ENCODE measurements at regions of chr6 and their contacts with region 1.

Region 1: DNA sequence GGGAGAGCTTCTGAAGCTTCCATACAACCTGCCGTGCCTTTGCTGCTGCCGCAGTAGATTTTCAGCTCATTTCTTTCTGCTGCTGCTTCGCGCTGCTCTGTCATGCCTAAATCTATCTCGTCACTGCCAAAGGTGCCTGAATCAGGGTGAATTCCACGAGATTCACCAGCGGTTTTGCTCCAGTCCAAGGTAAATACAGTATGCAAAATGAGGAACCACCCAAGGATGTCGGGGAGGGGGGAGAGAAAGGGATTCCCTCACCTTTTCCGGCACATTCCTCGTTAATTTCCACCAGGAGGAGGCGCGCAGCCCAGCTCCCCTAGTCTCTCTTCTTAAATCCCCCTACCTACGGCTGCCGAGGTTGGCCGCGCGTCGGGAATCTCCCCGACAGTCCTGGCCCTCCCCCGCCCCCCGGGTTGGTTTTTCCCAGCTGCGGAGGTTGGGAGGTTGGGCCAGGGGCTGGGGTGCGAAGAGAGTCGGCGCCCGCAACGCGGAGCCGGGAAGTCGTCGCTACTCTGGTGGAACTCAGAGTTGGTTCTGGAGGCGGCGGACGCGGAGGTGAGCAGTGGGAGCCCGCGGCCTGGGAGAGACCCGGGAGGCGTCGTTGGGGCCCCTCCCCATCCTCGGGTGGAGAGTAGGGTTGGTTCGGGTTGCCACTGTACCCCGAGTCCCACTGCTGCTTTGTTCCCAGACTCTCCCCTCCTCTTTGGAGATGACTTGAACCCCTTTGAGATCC is at the start of gene TPBG:
- DNase-seq: peak; percentile 92
- ATAC-seq: peak; percentile 78
- H3K4me3 Mint-ChIP-seq: peak within 1 kb of the TSS; percentile 93
- H3K27ac Mint-ChIP-seq: peak within 1 kb of the TSS; percentile 97
- H3K4me1 Mint-ChIP-seq: peaks cover 26% of the 10 kb centered on the region
- H3K27me3 Mint-ChIP-seq: peaks cover 3% of the 10 kb centered on the region; the same call in 1 of the 2 replicates
- CTCF ChIP-seq: 0 out of 2 replicates have a peak, but pooled peaks have one; percentile 3
- total RNA-seq, gene TPBG: 29.6 to 35.3 TPM (median 30.4 TPM) in 3 replicates

Region 2: GRCh38 chr6:81476881-81477280 is 886.6 kb before region 1 on chr6:
- CTCF ChIA-PET with region 1: no interaction called
- POLR2A ChIA-PET with region 1: no interaction called
- DNase-seq: no peak
- ATAC-seq: no peak
- H3K4me3 Mint-ChIP-seq: no peak overlapping the region
- H3K27ac Mint-ChIP-seq: no peak overlapping the region
- H3K4me1 Mint-ChIP-seq: no peaks in the 10 kb centered on the region
- H3K27me3 Mint-ChIP-seq: no peaks in the 10 kb centered on the region
- CTCF ChIP-seq: no peak

Region 3: DNA sequence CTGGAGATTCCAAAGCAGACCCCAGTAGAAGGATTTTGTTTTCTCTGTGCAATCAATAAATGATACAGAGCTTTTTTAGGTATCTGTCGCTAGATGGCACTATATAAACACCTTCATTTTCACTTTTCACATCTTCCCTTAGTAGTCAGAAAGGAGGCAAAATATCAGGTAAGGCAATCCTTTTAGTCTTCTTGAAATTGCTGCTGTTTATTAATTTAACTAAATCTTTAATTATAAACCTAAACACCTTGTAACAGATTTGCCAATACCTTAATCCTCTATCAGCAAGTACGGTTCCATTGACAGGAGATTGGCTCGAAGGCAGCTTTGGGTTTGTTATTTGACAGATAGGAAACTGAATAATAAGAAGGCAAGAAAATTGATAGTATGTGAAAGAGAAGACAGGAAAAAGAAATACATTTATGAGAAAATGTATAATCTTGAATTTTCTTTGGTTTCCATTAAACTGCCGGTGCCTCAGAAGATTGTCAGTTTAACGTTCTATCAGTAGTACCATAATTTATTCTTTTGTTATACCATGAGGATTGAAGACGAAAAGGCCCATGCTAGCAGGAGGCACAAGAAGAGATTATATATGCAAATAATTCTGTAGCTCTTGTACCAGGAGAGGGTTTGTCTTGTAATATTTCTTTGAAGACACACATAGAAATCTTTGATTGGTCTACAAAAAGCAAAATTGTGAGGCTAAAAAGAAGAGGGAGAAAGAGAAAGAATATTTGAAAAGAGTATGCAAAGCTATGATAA is 92.5 kb before region 1 on chr6:
- CTCF ChIA-PET with region 1: interaction called, 13 read pairs
- POLR2A ChIA-PET with region 1: no interaction called
- DNase-seq: no peak
- ATAC-seq: peak; percentile 41
- H3K4me3 Mint-ChIP-seq: no peak overlapping the region
- H3K27ac Mint-ChIP-seq: no peak overlapping the region
- H3K4me1 Mint-ChIP-seq: peaks cover 28% of the 10 kb centered on the region
- H3K27me3 Mint-ChIP-seq: no peaks in the 10 kb centered on the region
- CTCF ChIP-seq: peak; percentile 36; the same call in 1 of the 2 replicates

Region 4: DNA sequence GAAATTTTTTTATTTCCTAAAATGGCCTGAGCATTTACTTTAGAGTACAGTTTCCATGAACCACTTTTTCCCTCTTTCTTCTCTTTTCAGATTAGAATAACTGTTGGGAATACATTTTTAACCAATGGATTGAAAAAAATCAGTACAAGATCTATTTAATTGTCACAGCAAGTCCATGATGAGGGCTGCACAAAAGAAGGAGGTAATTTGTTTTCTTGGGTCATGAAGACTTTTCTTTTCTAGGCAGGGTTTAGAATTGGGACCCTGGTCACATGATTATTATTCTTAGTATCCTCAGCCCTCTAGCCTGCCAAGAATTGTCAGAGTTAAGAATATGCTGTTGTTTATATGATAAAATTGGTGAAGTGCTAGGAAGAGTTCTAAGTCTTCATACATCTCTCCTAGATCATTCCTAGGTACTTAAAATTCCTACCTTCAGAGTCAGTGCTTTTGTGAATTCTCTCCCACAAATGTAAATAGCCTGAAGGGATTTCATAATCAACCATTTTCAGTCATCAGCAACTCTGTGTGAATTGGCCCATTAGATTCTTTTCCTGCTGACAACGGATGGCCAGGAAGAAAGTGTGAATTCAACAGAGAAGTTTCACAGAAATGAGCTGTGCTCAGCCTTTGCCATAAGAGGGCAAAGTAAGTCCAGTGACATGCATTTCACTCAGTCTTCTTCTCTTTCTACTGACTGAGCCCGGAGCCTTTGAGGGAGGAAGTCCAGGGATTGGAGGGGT is 32.3 kb before region 1 on chr6:
- CTCF ChIA-PET with region 1: no interaction called
- POLR2A ChIA-PET with region 1: no interaction called
- DNase-seq: no peak
- ATAC-seq: peak; percentile 97
- H3K4me3 Mint-ChIP-seq: no peak overlapping the region
- H3K27ac Mint-ChIP-seq: peak overlapping the region; percentile 66
- H3K4me1 Mint-ChIP-seq: peaks cover 11% of the 10 kb centered on the region
- H3K27me3 Mint-ChIP-seq: no peaks in the 10 kb centered on the region
- CTCF ChIP-seq: no peak

Region 5: DNA sequence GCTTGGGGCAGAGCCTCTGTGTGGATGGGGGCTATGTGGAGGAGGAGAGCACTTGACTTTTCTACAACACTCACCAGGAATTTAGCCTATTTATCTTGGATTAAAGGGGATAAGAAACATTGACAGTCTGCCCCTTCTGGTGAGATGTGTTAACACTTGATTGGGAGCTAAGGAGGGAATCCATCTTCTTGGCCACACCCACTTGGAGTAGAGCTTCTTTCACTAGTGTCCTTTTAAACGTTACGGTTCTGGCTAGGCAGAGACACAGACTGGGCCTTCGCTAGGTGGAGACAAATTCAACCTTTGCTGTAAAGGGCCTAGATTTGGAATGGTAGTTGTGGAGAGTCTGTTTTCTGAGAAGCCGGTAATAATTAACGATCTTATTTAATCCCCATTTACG is 15.4 kb before region 1 on chr6:
- CTCF ChIA-PET with region 1: interaction called, 16 read pairs
- POLR2A ChIA-PET with region 1: no interaction called
- DNase-seq: no peak
- ATAC-seq: peak; percentile 99
- H3K4me3 Mint-ChIP-seq: no peak overlapping the region
- H3K27ac Mint-ChIP-seq: peak overlapping the region; percentile 59; the same call in 1 of the 2 replicates
- H3K4me1 Mint-ChIP-seq: no peaks in the 10 kb centered on the region
- H3K27me3 Mint-ChIP-seq: no peaks in the 10 kb centered on the region
- CTCF ChIP-seq: no peak; the same call in 1 of the 2 replicates

Measured in WTC11 (cell line).